HEK293 (cell line): ENCODE measurements at regions of chr12 and their contacts with region 1.

Region 1: GRCh38 chr12:59164991-59165718 is 244.9 kb upstream of the LRIG3 start:
- H3K4me3 ChIP-seq: no peak overlapping the region
- H3K27ac ChIP-seq: no peak overlapping the region
- H3K4me1 ChIP-seq: no peaks in the 10 kb centered on the region
- CTCF ChIP-seq: no peak

Region 2: GRCh38 chr12:59149997-59150642 is 15.0 kb before region 1 on chr12:
- CTCF ChIA-PET with region 1: interaction called, 15 read pairs
- POLR2A ChIA-PET with region 1: no interaction called
- H3K4me3 ChIP-seq: no peak overlapping the region
- H3K27ac ChIP-seq: no peak overlapping the region
- H3K4me1 ChIP-seq: no peaks in the 10 kb centered on the region
- CTCF ChIP-seq: peak; percentile 90